CD14-positive monocyte (primary cell): ENCODE measurements at regions of chr6 and their contacts with region 1.

Region 1: GRCh38 chr6:14876778-14877613 is 368.9 kb upstream of the JARID2 start:
- DNase-seq: peak; percentile 95 to 99 (median 99)
- H3K4me3 ChIP-seq: no peak overlapping the region
- H3K4me3 Mint-ChIP-seq: peak overlapping the region in 1 of 2 donors; percentile 67
- H3K27ac ChIP-seq: peak overlapping the region; percentile 95 to 99
- H3K27ac Mint-ChIP-seq: peak overlapping the region; percentile 99 to 100 (median 100)
- H3K4me1 ChIP-seq: peaks cover 86 to 90% of the 10 kb centered on the region in 2 donors
- H3K4me1 Mint-ChIP-seq: peaks cover 95% of the 10 kb centered on the region
- H3K27me3 ChIP-seq: no peaks in the 10 kb centered on the region
- H3K27me3 Mint-ChIP-seq: peaks cover 0 to 2% (median 0%) of the 10 kb centered on the region in 3 donors
- CTCF ChIP-seq: no peak

Region 2: DNA sequence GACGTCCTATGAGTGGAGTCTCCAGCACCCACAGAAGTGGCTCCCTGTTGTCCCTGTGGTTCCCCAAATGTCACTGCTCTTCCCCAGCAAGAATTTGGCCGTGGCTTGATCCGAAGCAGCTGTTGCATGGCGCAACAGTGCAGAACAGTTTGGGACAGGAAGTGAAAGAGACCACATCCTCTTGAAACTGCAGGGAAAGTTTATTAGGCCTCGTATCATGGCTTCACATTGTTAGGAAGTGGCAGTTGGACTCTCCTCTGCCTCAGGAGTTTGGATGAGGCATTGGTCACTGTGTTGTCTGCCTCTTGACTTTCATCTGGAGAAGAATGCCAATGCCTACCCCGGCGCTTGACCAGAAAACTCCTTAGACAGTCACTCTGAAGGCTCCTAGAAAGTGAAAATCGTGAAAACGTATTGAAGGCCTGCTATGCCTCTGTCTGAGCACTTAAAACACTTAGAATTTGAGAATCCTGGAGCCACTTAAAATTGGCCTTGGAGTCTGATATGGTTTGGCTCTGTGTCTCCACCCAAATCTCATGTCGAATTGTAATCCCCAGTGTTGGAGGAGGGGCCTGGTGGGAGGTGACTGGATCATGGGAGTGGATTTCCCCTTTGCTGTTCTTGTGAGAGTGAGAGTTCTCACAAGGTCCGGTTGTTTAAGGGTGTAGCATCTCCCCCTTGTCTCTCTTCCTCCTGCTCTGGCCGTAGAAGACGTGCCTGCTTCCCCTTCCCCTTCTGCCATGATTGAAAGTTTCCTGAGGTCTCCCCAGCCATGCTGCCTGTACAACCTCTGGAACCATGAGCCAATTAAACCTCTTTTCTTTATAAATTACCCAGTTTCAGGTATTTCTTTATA is 33.9 kb after region 1 on chr6:
- intact Hi-C with region 1: loop called in 1 of 2 experiments (anchors 5 kb)
- DNase-seq: peak; percentile 95 to 98 (median 97)
- H3K4me3 ChIP-seq: peak overlapping the region in 1 of 3 experiments; percentile 36
- H3K4me3 Mint-ChIP-seq: peak overlapping the region; percentile 58 to 85
- H3K27ac ChIP-seq: peak overlapping the region; percentile 86 to 98
- H3K27ac Mint-ChIP-seq: peak overlapping the region; percentile 96 to 99 (median 98)
- H3K4me1 ChIP-seq: peaks cover 40 to 45% of the 10 kb centered on the region in 2 donors
- H3K4me1 Mint-ChIP-seq: peaks cover 39% of the 10 kb centered on the region
- H3K27me3 ChIP-seq: no peaks in the 10 kb centered on the region
- H3K27me3 Mint-ChIP-seq: peaks cover 0 to 3% (median 0%) of the 10 kb centered on the region in 3 donors
- CTCF ChIP-seq: no peak

Region 3: GRCh38 chr6:14964515-14965270 is 87.7 kb after region 1 on chr6:
- intact Hi-C with region 1: loop called in 1 of 2 experiments (anchors 5 kb)
- DNase-seq: no peak
- H3K4me3 ChIP-seq: no peak overlapping the region
- H3K4me3 Mint-ChIP-seq: no peak overlapping the region
- H3K27ac ChIP-seq: no peak overlapping the region
- H3K27ac Mint-ChIP-seq: no peak overlapping the region
- H3K4me1 ChIP-seq: peaks cover 21 to 22% of the 10 kb centered on the region in 2 donors
- H3K4me1 Mint-ChIP-seq: peaks cover 30% of the 10 kb centered on the region
- H3K27me3 ChIP-seq: no peaks in the 10 kb centered on the region
- H3K27me3 Mint-ChIP-seq: no peaks in the 10 kb centered on the region
- CTCF ChIP-seq: no peak

Region 4: GRCh38 chr6:15327271-15327670 is 450.3 kb after region 1 on chr6:
- intact Hi-C with region 1: no loop called
- DNase-seq: no peak
- H3K4me3 ChIP-seq: no peak overlapping the region
- H3K4me3 Mint-ChIP-seq: no peak overlapping the region
- H3K27ac ChIP-seq: peak overlapping the region in 1 of 2 donors; percentile 56
- H3K27ac Mint-ChIP-seq: peak overlapping the region in 5 of 7 donors; percentile 50 to 64 (median 61)
- H3K4me1 ChIP-seq: peaks cover 58 to 79% of the 10 kb centered on the region in 2 donors
- H3K4me1 Mint-ChIP-seq: peaks cover 93% of the 10 kb centered on the region
- H3K27me3 ChIP-seq: no peaks in the 10 kb centered on the region
- H3K27me3 Mint-ChIP-seq: no peaks in the 10 kb centered on the region
- CTCF ChIP-seq: no peak